ENCODE measurements at regions of chr5 and their contacts with region 1.

Region 1: GRCh38 chr5:54229041-54229780 is 81.2 kb downstream of the ARL15 start:
- DNase-seq: no peak
- H3K4me3 ChIP-seq: no peak overlapping the region
- CTCF ChIP-seq: peak; percentile 86

Region 2: DNA sequence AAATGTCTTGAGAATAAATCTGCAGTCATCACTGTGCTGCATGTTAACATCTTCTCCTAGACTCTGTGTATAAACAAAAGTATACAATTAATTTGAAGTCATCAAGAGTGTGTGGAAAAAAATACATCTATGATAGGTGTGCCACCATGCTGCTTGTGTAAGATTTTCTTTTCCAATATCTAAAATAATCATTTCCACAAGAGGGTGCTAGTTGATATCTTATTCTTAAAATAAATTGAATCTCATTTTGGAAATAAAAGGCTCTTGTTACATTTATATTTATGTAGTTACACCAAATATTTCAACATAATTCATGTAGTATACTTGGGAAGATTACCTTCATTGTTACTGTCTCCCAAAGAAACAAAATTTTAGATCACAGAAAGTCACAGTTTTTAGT is 1105.5 kb before region 1 on chr5:
- CTCF ChIA-PET with region 1: interaction called, 48 read pairs
- POLR2A ChIA-PET with region 1: no interaction called
- DNase-seq: no peak
- H3K4me3 ChIP-seq: no peak overlapping the region
- CTCF ChIP-seq: no peak

Region 3: DNA sequence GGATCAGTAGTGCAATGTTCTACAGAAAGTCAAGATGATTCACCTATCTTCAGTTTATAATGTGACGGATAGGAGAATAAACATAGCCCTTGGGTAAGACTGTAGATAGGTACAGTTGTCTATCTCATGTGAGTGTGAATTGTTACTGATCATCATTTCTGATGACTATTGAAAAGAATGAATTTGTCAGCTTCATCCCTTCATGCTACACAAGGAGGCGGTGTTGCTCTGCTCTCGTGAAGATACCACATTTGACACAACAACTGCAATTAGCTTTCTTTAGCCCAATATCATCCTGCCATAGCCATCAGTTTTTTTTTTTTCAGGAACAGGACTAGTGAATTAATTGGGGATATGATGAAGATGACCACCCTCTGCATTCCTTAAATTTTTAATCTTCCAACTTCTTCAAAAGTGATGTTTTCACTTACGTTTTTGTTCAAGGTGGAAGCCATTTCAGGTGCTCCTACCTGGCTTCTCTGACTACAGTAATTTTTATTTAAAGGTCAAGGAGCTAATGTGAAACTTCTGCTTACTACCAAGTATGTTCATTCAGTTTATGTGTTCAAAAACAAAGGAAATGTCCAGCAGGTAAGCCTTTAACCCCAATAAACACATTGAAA is 966.8 kb before region 1 on chr5:
- CTCF ChIA-PET with region 1: interaction called, 22 read pairs
- POLR2A ChIA-PET with region 1: no interaction called
- DNase-seq: no peak
- H3K4me3 ChIP-seq: no peak overlapping the region
- CTCF ChIP-seq: peak; percentile 68

Region 4: GRCh38 chr5:53481887-53482716 is 747.1 kb before region 1 on chr5:
- CTCF ChIA-PET with region 1: interaction called, 26 read pairs
- POLR2A ChIA-PET with region 1: no interaction called
- DNase-seq: no peak
- H3K4me3 ChIP-seq: peak overlapping the region; percentile 97
- CTCF ChIP-seq: peak; percentile 21